IMR-90 (cell line): ENCODE measurements at regions of chr7 and their contacts with region 1.

Region 1: GRCh38 chr7:2451171-2452073 is 24.8 kb downstream of the GRIFIN start:
- DNase-seq: peak; percentile 50
- ATAC-seq: peak; percentile 99
- H3K4me3 ChIP-seq: no peak overlapping the region
- H3K27ac ChIP-seq: no peak overlapping the region
- H3K4me1 ChIP-seq: peaks cover 4% of the 10 kb centered on the region; the same call in 1 of the 2 replicates
- H3K27me3 ChIP-seq: no peaks in the 10 kb centered on the region
- CTCF ChIP-seq: peak; percentile 88
- POLR2A ChIP-seq: no peak
- RAD21 ChIP-seq: peak; percentile 93

Region 2: DNA sequence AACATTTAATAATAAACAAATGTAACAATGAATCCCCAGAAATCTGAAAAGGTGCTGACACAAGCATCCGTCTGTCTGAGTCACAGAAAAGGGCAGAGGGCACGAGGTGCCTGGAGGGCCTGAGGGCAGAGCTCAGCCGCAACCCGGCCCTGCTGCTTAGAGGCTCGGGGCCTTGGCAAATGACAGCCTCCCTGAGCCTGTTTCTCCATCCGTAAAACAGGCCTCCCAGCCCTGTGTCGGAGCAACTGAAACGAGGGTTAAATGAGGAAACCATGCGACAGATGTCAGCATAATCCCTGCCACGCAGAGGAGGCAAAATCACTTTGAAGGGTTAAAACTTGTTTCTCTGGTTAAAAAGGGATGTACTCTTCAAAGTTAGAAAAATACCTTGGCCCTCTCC is 184.5 kb before region 1 on chr7:
- CTCF ChIA-PET with region 1: no interaction called
- POLR2A ChIA-PET with region 1: no interaction called
- dilution Hi-C with region 1: no loop called
- in situ Hi-C with region 1: no loop called
- intact Hi-C with region 1: no loop called
- DNase-seq: peak; percentile 62
- ATAC-seq: peak; percentile 83
- H3K4me3 ChIP-seq: no peak overlapping the region
- H3K27ac ChIP-seq: peak overlapping the region; percentile 61; the same call in 1 of the 2 replicates
- H3K4me1 ChIP-seq: peaks cover 13% of the 10 kb centered on the region
- H3K27me3 ChIP-seq: no peaks in the 10 kb centered on the region
- CTCF ChIP-seq: no peak
- POLR2A ChIP-seq: no peak
- RAD21 ChIP-seq: no peak

Region 3: GRCh38 chr7:2403014-2403717 is 48.3 kb before region 1 on chr7 and contains the start of gene CHST12:
- CTCF ChIA-PET with region 1: no interaction called
- POLR2A ChIA-PET with region 1: no interaction called
- dilution Hi-C with region 1: no loop called
- in situ Hi-C with region 1: no loop called
- intact Hi-C with region 1: loop called (anchors 10 kb)
- DNase-seq: peak; percentile 90
- ATAC-seq: peak; percentile 88
- H3K4me3 ChIP-seq: peak within 1 kb of the TSS; percentile 85
- H3K27ac ChIP-seq: peak within 1 kb of the TSS; percentile 50
- H3K4me1 ChIP-seq: peaks cover 9% of the 10 kb centered on the region
- H3K27me3 ChIP-seq: no peaks in the 10 kb centered on the region
- CTCF ChIP-seq: no peak
- POLR2A ChIP-seq: 0 out of 2 replicates have a peak, but pooled peaks have one; percentile 32
- RAD21 ChIP-seq: no peak
- total RNA-seq, gene CHST12: 3.8 and 4.7 TPM in 2 replicates

Region 4: DNA sequence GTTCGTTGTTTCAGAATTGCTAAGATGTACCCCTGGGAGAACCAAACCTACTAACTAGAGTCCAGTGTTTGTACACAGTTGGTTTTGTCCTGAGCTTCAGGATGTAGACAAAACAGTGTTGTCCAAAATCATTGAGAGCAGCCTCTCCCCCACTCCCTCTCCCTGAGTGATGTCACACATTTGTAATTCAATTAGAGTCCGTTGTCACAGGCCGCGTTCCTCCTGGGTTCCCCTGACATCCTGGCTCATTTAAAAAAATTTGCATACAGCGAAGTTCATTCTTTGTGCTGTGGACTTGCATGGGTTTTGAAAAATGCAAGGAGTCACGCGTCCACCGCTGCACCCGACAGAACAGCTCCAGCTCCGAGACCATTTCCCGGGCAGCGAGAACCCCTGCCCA is 14.5 kb after region 1 on chr7:
- CTCF ChIA-PET with region 1: interaction called, 20 read pairs
- POLR2A ChIA-PET with region 1: interaction called, 4 read pairs
- dilution Hi-C with region 1: no loop called
- in situ Hi-C with region 1: no loop called
- intact Hi-C with region 1: loop called (anchors 2 kb)
- DNase-seq: no peak
- ATAC-seq: no peak
- H3K4me3 ChIP-seq: no peak overlapping the region
- H3K27ac ChIP-seq: no peak overlapping the region
- H3K4me1 ChIP-seq: no peaks in the 10 kb centered on the region
- H3K27me3 ChIP-seq: peaks cover 3% of the 10 kb centered on the region; the same call in 1 of the 2 replicates
- CTCF ChIP-seq: no peak
- POLR2A ChIP-seq: no peak
- RAD21 ChIP-seq: no peak

Region 5: DNA sequence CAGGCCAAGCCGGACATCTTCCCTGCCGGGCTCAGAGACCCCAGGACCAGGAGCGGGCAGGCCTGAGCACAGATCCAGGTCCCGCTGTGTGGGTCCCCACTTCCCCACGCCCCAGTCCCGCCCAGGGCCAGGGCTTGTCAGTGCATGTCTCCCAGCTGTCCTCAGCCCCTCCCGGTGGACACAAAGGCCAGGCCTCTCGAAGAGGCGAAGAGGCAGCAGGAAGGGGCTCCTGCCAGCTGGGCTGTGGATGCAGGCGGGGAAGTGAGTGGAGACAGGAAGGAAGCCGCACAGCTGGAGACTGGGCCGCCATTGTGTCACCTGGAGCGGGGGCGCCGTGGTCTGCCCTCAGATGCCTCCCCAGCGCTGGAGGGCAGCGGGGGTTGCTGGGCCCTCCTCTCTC is 20.0 kb after region 1 on chr7:
- CTCF ChIA-PET with region 1: interaction called, 20 read pairs
- POLR2A ChIA-PET with region 1: interaction called, 4 read pairs
- dilution Hi-C with region 1: no loop called
- in situ Hi-C with region 1: no loop called
- intact Hi-C with region 1: loop called (anchors 2 kb)
- DNase-seq: peak; percentile 25
- ATAC-seq: peak; percentile 46
- H3K4me3 ChIP-seq: no peak overlapping the region
- H3K27ac ChIP-seq: no peak overlapping the region; the same call in 1 of the 2 replicates
- H3K4me1 ChIP-seq: peaks cover 6% of the 10 kb centered on the region; the same call in 1 of the 2 replicates
- H3K27me3 ChIP-seq: peaks cover 3% of the 10 kb centered on the region; the same call in 1 of the 2 replicates
- CTCF ChIP-seq: no peak
- POLR2A ChIP-seq: no peak
- RAD21 ChIP-seq: no peak

Region 6: GRCh38 chr7:2555121-2556052 is 104.0 kb after region 1 on chr7 and contains the start of gene BRAT1:
- CTCF ChIA-PET with region 1: interaction called, 3 read pairs
- POLR2A ChIA-PET with region 1: no interaction called
- dilution Hi-C with region 1: no loop called
- in situ Hi-C with region 1: no loop called
- intact Hi-C with region 1: loop called (anchors 5 kb)
- DNase-seq: peak; percentile 90
- ATAC-seq: peak; percentile 92
- H3K4me3 ChIP-seq: peak within 1 kb of the TSS; percentile 81
- H3K27ac ChIP-seq: peak within 1 kb of the TSS; percentile 99
- H3K4me1 ChIP-seq: peaks cover 9% of the 10 kb centered on the region
- H3K27me3 ChIP-seq: no peaks in the 10 kb centered on the region
- CTCF ChIP-seq: peak; percentile 47
- POLR2A ChIP-seq: peak; percentile 66; the same call in 1 of the 2 replicates
- RAD21 ChIP-seq: peak; percentile 21; the same call in 1 of the 2 replicates
- total RNA-seq, gene BRAT1: 5.8 and 6.8 TPM in 2 replicates

Region 7: GRCh38 chr7:2680792-2681490 is 229.5 kb after region 1 on chr7:
- CTCF ChIA-PET with region 1: interaction called, 5 read pairs
- POLR2A ChIA-PET with region 1: interaction called, 5 read pairs
- dilution Hi-C with region 1: no loop called
- in situ Hi-C with region 1: no loop called
- intact Hi-C with region 1: loop called (anchors 1 kb)
- DNase-seq: peak; percentile 41
- ATAC-seq: peak; percentile 86
- H3K4me3 ChIP-seq: no peak overlapping the region
- H3K27ac ChIP-seq: no peak overlapping the region
- H3K4me1 ChIP-seq: no peaks in the 10 kb centered on the region
- H3K27me3 ChIP-seq: peaks cover 3% of the 10 kb centered on the region; the same call in 1 of the 2 replicates
- CTCF ChIP-seq: peak; percentile 70
- POLR2A ChIP-seq: no peak
- RAD21 ChIP-seq: peak; percentile 70